ENCODE measurements at regions of chr3 and their contacts with region 1.

Region 1: DNA sequence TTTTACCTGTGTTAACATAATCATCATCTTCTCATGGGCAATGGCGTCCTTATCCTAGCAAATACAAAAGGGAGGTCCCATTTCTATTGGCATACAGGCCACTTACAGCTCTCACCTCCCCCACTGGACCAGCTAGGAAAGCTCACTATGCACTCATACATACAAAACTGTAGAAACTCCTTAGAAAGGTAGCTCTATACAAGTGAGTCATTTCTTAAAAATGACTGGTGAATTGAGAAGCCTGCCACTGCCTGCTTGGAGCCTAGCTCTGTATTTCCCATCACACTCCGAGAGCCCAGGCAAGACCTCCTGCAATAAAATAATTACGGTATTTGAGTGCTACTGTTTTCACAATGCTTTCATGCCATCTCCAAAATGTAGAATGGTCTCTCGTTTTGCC is 321.8 kb downstream of the ULK4 start:
- DNase-seq: no peak
- H3K4me3 Mint-ChIP-seq: no peak overlapping the region
- H3K27ac Mint-ChIP-seq: no peak overlapping the region
- H3K4me1 Mint-ChIP-seq: no peaks in the 10 kb centered on the region
- H3K27me3 Mint-ChIP-seq: no peaks in the 10 kb centered on the region
- CTCF ChIP-seq: no peak

Region 2: GRCh38 chr3:41608347-41608746 is 31.7 kb before region 1 on chr3:
- CTCF ChIA-PET with region 1: no interaction called
- intact Hi-C with region 1: no loop called
- DNase-seq: no peak
- H3K4me3 Mint-ChIP-seq: no peak overlapping the region
- H3K27ac Mint-ChIP-seq: no peak overlapping the region
- H3K4me1 Mint-ChIP-seq: no peaks in the 10 kb centered on the region
- H3K27me3 Mint-ChIP-seq: no peaks in the 10 kb centered on the region
- CTCF ChIP-seq: no peak

Region 3: DNA sequence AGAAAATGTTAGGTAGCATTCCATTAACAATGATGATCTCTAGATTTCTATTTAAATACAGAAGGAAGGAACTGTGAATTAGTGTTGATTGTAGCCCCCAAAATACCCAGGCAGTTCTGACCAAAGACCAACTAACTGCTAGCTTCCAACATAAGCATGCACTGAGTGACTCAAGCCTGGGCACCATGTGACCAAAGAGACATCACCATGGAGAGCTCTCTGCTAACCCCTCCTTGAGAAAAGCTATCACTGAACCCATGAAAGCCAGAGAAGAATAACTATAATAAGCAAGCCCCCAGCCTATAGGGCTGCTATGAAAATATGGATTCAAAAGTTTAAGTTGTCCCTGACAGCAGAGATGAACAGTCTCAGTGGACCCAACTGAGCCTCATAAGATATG is 11.6 kb after region 1 on chr3:
- CTCF ChIA-PET with region 1: no interaction called
- intact Hi-C with region 1: loop called (anchors 1 kb)
- DNase-seq: no peak
- H3K4me3 Mint-ChIP-seq: no peak overlapping the region
- H3K27ac Mint-ChIP-seq: no peak overlapping the region
- H3K4me1 Mint-ChIP-seq: no peaks in the 10 kb centered on the region
- H3K27me3 Mint-ChIP-seq: no peaks in the 10 kb centered on the region
- CTCF ChIP-seq: no peak

Measured in Calu3 (cell line).